Common myeloid progenitor, CD34-positive (primary cell): ENCODE measurements at regions of chr12 and their contacts with region 1.

Region 1: DNA sequence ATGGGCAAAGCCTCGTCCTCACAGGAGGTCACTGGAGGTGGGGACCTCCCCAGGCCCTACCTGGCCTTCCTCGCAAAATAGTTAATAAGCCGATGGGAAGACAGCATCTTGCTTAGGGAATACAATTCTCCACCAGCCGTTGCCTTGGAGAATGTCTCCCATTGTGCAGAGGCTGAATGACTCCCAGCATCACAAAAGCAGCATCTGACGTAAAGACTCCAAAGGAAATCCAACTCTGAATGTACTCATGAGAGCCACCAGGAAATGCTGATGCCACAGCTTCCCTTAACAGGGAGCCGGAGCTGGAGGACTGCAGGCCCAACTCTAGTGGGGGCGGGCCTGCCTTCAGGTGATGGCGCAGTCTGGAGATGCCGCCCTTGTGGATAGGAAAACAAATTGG is 15.5 kb downstream of the CCDC63 start:
- DNase-seq: no peak
- H3K4me3 ChIP-seq: no peak overlapping the region
- H3K27ac ChIP-seq: no peak overlapping the region
- H3K4me1 ChIP-seq: peaks cover 0 to 6% (median 6%) of the 10 kb centered on the region in 4 experiments
- H3K27me3 ChIP-seq: no peaks in the 10 kb centered on the region

Region 2: DNA sequence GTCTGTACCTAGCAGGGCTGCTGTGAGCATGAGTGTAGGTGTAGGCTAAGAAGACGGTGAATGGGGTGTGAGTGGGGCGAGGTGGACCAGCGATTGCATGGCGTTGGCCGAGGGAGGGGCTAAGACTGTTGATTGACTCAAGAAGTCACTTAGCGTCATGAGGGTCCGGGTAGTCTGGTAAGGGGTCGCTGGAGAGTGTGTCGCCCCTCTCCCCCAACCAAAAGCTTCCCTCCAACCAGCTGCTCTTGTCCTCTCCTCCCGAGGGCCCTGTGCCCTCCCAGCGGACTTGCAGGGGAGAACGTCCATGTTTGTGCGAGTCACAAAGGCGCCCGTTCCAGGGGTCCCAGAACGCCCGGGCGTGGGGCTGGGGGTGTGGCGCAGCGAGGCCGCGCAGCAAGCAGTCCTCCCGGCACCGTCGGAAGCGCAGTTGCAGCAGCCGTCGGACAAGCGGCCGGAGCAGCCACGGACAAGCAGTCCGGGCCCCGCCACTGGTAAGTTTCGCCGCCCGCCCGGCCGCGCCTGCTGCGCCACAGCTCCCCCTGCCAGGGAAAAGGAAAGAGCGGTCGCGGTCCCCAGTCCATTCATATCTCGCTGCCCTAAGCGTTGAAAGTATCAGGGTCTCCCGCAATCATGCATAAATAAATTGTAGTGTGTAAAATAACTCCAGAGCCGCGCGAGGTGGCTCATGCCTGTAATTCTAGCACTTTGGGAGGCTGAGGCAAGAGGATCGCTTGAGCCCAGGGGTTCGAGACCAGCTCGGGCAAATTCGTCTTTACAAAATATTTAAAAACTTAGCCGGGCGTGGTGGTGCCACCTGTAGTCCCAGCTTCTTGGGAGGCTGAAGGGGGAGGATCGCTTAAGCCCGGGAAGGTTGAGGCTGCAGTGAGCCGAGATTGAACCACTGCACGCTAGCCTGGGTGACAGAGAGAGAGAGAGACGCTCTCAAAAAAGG is 15.4 kb before region 1 on chr12 and contains the start of gene CCDC63:
- CTCF ChIA-PET with region 1: interaction called, 10 read pairs
- POLR2A ChIA-PET with region 1: no interaction called
- DNase-seq: peak; percentile 55 to 72 (median 59)
- H3K4me3 ChIP-seq: peak within 1 kb of the TSS; percentile 60 to 88 (median 78)
- H3K27ac ChIP-seq: no peak within 1 kb of the TSS
- H3K4me1 ChIP-seq: peaks cover 0 to 8% (median 4%) of the 10 kb centered on the region in 4 experiments
- H3K27me3 ChIP-seq: peaks cover 0 to 5% (median 0%) of the 10 kb centered on the region in 5 experiments

Region 3: GRCh38 chr12:110874781-110875180 is 12.5 kb after region 1 on chr12:
- CTCF ChIA-PET with region 1: no interaction called
- POLR2A ChIA-PET with region 1: no interaction called
- DNase-seq: no peak
- H3K4me3 ChIP-seq: no peak overlapping the region
- H3K27ac ChIP-seq: no peak overlapping the region
- H3K4me1 ChIP-seq: no peaks in the 10 kb centered on the region
- H3K27me3 ChIP-seq: no peaks in the 10 kb centered on the region

Region 4: GRCh38 chr12:110913119-110914056 is 51.1 kb after region 1 on chr12:
- CTCF ChIA-PET with region 1: no interaction called
- POLR2A ChIA-PET with region 1: no interaction called
- DNase-seq: peak in 2 of 3 donors; percentile 33 to 61
- H3K4me3 ChIP-seq: no peak overlapping the region
- H3K27ac ChIP-seq: no peak overlapping the region
- H3K4me1 ChIP-seq: no peaks in the 10 kb centered on the region
- H3K27me3 ChIP-seq: peaks cover 0 to 2% (median 0%) of the 10 kb centered on the region in 5 experiments